HEK293 (cell line): ENCODE measurements at regions of chr19 and their contacts with region 1.

Region 1: DNA sequence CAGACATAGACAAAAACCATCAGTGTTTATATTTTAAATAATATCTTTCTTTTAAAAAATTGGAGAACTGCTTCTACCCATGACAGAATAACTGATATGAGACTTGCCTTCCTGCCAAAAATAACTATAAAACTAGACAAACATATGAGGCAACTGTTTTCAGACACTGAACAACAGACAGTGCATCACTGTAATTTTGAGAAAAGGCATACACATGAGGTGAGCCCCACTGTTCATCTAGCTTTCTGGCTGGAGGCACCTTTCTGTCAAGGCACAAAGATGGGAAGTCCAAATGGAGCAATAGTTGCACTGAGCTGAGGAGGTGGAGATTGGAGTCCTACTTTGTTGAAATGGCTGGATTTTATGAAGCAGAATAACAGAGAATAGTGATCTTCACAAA is 71.9 kb upstream of the ZNF507 start:
- H3K4me3 ChIP-seq: no peak overlapping the region
- H3K27ac ChIP-seq: no peak overlapping the region
- H3K4me1 ChIP-seq: no peaks in the 10 kb centered on the region; the same call in 1 of the 2 replicates
- CTCF ChIP-seq: no peak

Region 2: GRCh38 chr19:32287811-32288227 is 14.3 kb after region 1 on chr19:
- CTCF ChIA-PET with region 1: interaction called, 12 read pairs
- POLR2A ChIA-PET with region 1: no interaction called
- H3K4me3 ChIP-seq: no peak overlapping the region
- H3K27ac ChIP-seq: no peak overlapping the region
- H3K4me1 ChIP-seq: peaks cover 3% of the 10 kb centered on the region; the same call in 1 of the 2 replicates
- CTCF ChIP-seq: peak; percentile 93

Region 3: GRCh38 chr19:32330213-32330857 is 56.9 kb after region 1 on chr19:
- CTCF ChIA-PET with region 1: no interaction called
- POLR2A ChIA-PET with region 1: no interaction called
- H3K4me3 ChIP-seq: no peak overlapping the region
- H3K27ac ChIP-seq: no peak overlapping the region
- H3K4me1 ChIP-seq: no peaks in the 10 kb centered on the region
- CTCF ChIP-seq: no peak